ENCODE measurements at regions of chr4 and their contacts with region 1.

Region 1: GRCh38 chr4:88378691-88379559 is at the start of gene HERC6:
- DNase-seq: peak; percentile 64
- ATAC-seq: peak; percentile 80
- H3K4me3 Mint-ChIP-seq: peak within 1 kb of the TSS; percentile 92
- H3K27ac Mint-ChIP-seq: peak within 1 kb of the TSS; percentile 91
- H3K4me1 Mint-ChIP-seq: peaks cover 31% of the 10 kb centered on the region
- H3K27me3 Mint-ChIP-seq: no peaks in the 10 kb centered on the region
- CTCF ChIP-seq: no peak
- total RNA-seq, gene HERC6: 11.4 and 12.2 TPM in 2 replicates

Region 2: DNA sequence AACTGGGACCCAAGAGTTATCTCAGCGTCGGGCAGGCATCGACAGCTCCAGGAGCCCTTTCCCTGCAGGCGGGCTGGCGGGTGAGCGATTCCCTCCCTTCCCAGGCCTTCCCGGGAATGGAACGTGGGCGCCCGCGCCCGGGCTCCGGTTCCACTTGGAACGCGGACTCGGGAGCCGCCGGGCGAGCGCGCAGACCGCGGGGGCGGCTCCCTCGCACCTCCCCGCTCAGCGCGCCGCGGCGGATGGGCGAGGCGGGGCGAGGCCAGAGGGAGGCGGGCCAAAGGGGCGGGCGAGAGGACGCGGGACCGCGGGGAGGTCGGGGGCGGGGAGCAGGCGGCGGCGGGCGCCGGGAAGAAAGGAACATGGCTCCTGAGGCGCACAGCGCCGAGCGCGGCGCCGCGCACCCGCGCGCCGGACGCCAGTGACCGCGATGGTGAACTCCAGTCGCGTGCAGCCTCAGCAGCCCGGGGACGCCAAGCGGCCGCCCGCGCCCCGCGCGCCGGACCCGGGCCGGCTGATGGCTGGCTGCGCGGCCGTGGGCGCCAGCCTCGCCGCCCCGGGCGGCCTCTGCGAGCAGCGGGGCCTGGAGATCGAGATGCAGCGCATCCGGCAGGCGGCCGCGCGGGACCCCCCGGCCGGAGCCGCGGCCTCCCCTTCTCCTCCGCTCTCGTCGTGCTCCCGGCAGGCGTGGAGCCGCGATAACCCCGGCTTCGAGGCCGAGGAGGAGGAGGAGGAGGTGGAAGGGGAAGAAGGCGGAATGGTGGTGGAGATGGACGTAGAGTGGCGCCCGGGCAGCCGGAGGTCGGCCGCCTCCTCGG is 371.4 kb before region 1 on chr4 and contains the start of gene PKD2:
- CTCF ChIA-PET with region 1: no interaction called
- POLR2A ChIA-PET with region 1: no interaction called
- intact Hi-C with region 1: loop called (anchors 5 kb)
- DNase-seq: peak; percentile 61
- ATAC-seq: peak; percentile 94
- H3K4me3 Mint-ChIP-seq: peak within 1 kb of the TSS; percentile 87
- H3K27ac Mint-ChIP-seq: peak within 1 kb of the TSS; percentile 47
- H3K4me1 Mint-ChIP-seq: peaks cover 23% of the 10 kb centered on the region
- H3K27me3 Mint-ChIP-seq: peaks cover 4% of the 10 kb centered on the region
- CTCF ChIP-seq: no peak
- total RNA-seq, gene PKD2: 4.2 and 6.2 TPM in 2 replicates

Region 3: DNA sequence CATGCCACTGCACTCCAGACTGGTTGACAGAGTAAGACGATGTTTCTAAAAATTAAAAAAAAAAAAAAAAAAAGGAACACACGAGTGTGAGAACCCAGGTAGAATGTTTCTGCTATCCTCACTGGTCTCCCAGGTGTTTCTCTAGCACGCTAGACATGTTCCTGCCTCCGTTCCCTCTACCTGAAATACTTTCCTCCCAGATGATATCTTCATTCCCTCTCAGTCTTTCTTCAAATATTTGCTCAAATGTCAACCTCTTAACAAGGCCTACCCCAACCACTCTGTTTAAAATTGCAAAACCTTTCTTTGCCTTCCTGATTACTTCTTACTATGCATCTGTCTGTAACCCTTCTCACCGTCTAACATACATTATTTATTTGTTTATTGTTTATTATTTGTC is 161.0 kb before region 1 on chr4:
- CTCF ChIA-PET with region 1: interaction called, 3 read pairs
- POLR2A ChIA-PET with region 1: no interaction called
- intact Hi-C with region 1: loop called (anchors 2 kb)
- DNase-seq: no peak
- ATAC-seq: no peak
- H3K4me3 Mint-ChIP-seq: no peak overlapping the region
- H3K27ac Mint-ChIP-seq: no peak overlapping the region
- H3K4me1 Mint-ChIP-seq: peaks cover 3% of the 10 kb centered on the region
- H3K27me3 Mint-ChIP-seq: peaks cover 2% of the 10 kb centered on the region
- CTCF ChIP-seq: no peak

Region 4: DNA sequence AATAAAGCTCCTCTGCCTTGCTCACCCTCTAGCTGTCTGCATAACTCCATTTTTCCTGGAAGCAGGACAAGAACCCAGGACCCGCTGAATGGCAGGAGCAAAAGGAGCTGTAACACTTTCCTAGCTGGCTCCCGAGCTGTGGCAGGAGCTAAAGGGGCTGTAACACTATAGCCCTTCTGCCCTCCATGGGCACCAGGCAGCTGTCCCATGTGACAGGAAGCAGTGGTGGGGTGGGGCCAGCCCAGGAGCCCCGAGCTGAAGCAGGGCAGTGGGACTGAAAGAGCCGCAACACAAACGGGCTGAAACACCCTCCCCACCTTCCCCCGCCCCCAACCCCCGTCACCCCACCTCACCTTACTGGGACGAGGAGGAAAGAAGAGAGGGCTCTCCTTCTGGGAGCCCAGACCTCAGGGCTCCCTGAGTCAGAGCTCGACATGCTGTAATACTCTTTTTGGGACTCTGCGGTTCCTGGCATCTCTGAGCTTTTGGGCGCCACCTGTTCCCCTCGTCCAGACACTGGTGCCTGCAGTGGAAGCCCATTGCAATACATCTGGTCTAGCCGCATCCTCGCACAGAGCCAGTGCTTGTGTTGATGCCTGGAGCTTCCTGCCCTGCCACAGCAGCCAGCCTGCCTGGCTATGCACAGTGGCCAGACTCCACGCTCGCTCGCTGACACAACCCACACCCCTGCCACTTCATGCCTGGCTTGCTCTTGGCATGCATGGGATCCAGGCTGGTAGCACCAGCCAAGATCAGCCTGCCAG is 133.9 kb before region 1 on chr4:
- CTCF ChIA-PET with region 1: no interaction called
- POLR2A ChIA-PET with region 1: no interaction called
- intact Hi-C with region 1: no loop called
- DNase-seq: no peak
- ATAC-seq: peak; percentile 88
- H3K4me3 Mint-ChIP-seq: peak overlapping the region; percentile 69
- H3K27ac Mint-ChIP-seq: no peak overlapping the region
- H3K4me1 Mint-ChIP-seq: peaks cover 11% of the 10 kb centered on the region
- H3K27me3 Mint-ChIP-seq: no peaks in the 10 kb centered on the region
- CTCF ChIP-seq: no peak

Region 5: DNA sequence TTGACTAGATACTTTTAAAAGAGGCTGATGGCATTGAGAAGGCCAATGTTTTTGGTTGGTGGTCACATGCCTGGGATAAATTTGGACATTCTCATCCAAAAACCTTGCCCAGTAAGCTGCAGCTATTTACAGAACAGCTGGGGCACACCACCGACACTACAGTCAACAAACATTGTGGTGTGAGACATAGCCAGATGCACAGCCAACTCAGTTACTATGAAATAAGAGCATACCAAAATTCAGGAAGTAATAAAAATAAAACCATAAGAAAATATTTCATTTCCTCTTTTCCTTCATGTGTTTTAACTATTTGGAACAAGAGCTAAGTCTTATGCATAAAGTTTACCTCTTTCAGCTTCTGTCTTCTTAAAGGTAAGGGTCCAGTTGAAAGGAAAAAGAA is 103.4 kb before region 1 on chr4:
- CTCF ChIA-PET with region 1: no interaction called
- POLR2A ChIA-PET with region 1: interaction called, 6 read pairs
- intact Hi-C with region 1: loop called (anchors 2 kb)
- DNase-seq: no peak
- ATAC-seq: peak; percentile 93
- H3K4me3 Mint-ChIP-seq: peak overlapping the region; percentile 59
- H3K27ac Mint-ChIP-seq: peak overlapping the region; percentile 79
- H3K4me1 Mint-ChIP-seq: peaks cover 72% of the 10 kb centered on the region
- H3K27me3 Mint-ChIP-seq: no peaks in the 10 kb centered on the region
- CTCF ChIP-seq: no peak

Region 6: GRCh38 chr4:88320780-88321373 is 58.0 kb before region 1 on chr4:
- CTCF ChIA-PET with region 1: interaction called, 6 read pairs
- POLR2A ChIA-PET with region 1: interaction called, 16 read pairs
- intact Hi-C with region 1: loop called (anchors 1 kb)
- DNase-seq: peak; percentile 33
- ATAC-seq: peak; percentile 99
- H3K4me3 Mint-ChIP-seq: peak overlapping the region; percentile 80
- H3K27ac Mint-ChIP-seq: peak overlapping the region; percentile 97
- H3K4me1 Mint-ChIP-seq: peaks cover 35% of the 10 kb centered on the region
- H3K27me3 Mint-ChIP-seq: no peaks in the 10 kb centered on the region
- CTCF ChIP-seq: no peak

Region 7: DNA sequence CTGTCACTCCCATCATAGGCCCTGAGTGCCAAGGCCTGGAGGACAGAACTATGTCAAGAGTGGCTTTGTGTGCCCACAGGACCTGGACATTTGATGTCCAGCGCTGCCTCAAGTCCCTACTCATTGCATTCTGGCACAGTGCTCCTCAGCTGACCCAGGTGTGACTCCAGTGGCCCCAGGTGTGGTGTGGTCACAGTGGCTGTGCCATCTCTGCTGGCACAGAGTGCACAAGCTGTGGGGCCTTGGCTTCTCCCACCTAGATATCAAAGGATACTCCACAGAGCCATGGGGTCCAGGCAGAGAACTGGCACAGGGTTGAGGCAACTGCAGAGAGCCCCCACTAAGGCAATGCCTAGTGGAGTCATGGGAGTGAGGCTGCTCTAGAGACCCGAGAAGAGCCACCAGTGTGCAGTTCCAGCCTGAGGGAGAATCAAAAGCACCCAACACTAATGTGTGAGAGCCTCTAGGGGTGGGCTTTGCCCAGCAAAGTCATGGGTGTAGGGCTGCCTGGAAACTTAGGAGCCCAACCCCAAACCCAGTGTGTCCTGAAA is 119.0 kb after region 1 on chr4:
- CTCF ChIA-PET with region 1: no interaction called
- POLR2A ChIA-PET with region 1: no interaction called
- intact Hi-C with region 1: no loop called
- DNase-seq: no peak
- ATAC-seq: no peak
- H3K4me3 Mint-ChIP-seq: no peak overlapping the region
- H3K27ac Mint-ChIP-seq: no peak overlapping the region
- H3K4me1 Mint-ChIP-seq: no peaks in the 10 kb centered on the region
- H3K27me3 Mint-ChIP-seq: no peaks in the 10 kb centered on the region
- CTCF ChIP-seq: no peak

Region 8: DNA sequence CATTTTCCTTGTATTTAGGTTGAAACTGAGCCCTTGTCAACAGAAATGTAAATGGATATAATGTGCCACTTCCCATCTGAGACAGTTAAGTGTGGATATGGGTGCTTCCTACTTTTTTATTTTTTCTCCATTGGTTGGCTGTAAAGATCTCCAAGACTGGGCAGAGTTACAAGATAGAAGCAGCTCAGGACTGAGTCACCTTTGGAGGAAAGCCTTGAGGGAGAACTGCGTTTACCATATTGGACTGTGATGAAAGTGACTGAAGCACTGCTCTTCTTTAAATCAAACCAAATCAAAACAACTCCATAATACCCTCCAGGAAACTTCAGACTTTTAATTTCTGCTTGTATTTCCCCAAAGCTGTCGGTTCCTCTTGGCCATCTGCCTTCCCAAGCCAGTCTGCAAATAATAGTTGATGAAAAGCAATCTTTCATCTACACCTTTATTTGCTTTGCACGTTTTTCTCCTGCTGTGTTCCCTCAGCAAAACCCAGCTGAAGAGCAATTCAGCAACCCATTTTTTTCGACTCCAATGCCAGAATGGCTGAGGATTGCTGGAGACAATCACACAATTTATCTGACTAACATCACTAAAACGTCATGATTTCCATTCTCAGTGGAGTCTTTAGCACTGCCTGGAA is 834.3 kb after region 1 on chr4:
- CTCF ChIA-PET with region 1: no interaction called
- POLR2A ChIA-PET with region 1: no interaction called
- intact Hi-C with region 1: no loop called
- DNase-seq: no peak
- ATAC-seq: no peak
- H3K4me3 Mint-ChIP-seq: no peak overlapping the region
- H3K27ac Mint-ChIP-seq: no peak overlapping the region
- H3K4me1 Mint-ChIP-seq: peaks cover 10% of the 10 kb centered on the region
- H3K27me3 Mint-ChIP-seq: peaks cover 3% of the 10 kb centered on the region
- CTCF ChIP-seq: no peak

Measured in activated B cell treated with CpG ODN at 0.5 μM for 24 hours (primary cell).